Activated CD8-positive, alpha-beta T cell treated with anti-CD3 and anti-CD28 coated beads, Interleukin-2, amount 10 ng/mL, durations not matched to agents 7 days and 5 days (primary cell): ENCODE measurements at regions of chr19 and their contacts with region 1.

Region 1: GRCh38 chr19:46704379-46705076 is 12.4 kb downstream of the PRKD2 start:
- DNase-seq: peak; percentile 91
- ATAC-seq: peak; percentile 91
- H3K4me3 Mint-ChIP-seq: no peak overlapping the region
- H3K27ac Mint-ChIP-seq: peak overlapping the region; percentile 77
- H3K4me1 Mint-ChIP-seq: peaks cover 10% of the 10 kb centered on the region
- H3K27me3 Mint-ChIP-seq: no peaks in the 10 kb centered on the region

Region 2: GRCh38 chr19:46654621-46655152 is 49.8 kb before region 1 on chr19:
- CTCF ChIA-PET with region 1: no interaction called
- POLR2A ChIA-PET with region 1: no interaction called
- DNase-seq: no peak
- ATAC-seq: no peak
- H3K4me3 Mint-ChIP-seq: no peak overlapping the region
- H3K27ac Mint-ChIP-seq: no peak overlapping the region
- H3K4me1 Mint-ChIP-seq: peaks cover 3% of the 10 kb centered on the region
- H3K27me3 Mint-ChIP-seq: peaks cover 30% of the 10 kb centered on the region

Region 3: GRCh38 chr19:46717034-46717723 is 12.7 kb after region 1 on chr19 and contains the start of gene PRKD2:
- CTCF ChIA-PET with region 1: interaction called, 53 read pairs
- POLR2A ChIA-PET with region 1: interaction called, 19 read pairs
- DNase-seq: peak; percentile 93
- ATAC-seq: peak; percentile 43
- H3K4me3 Mint-ChIP-seq: peak within 1 kb of the TSS; percentile 94
- H3K27ac Mint-ChIP-seq: peak within 1 kb of the TSS; percentile 98
- H3K4me1 Mint-ChIP-seq: peaks cover 53% of the 10 kb centered on the region
- H3K27me3 Mint-ChIP-seq: no peaks in the 10 kb centered on the region
- total RNA-seq, gene PRKD2: 161 to 166 TPM

Region 4: GRCh38 chr19:46746281-46747013 is 41.9 kb after region 1 on chr19 and contains the start of gene STRN4:
- CTCF ChIA-PET with region 1: interaction called, 18 read pairs
- POLR2A ChIA-PET with region 1: interaction called, 4 read pairs
- DNase-seq: peak; percentile 65
- ATAC-seq: peak; percentile 56
- H3K4me3 Mint-ChIP-seq: peak within 1 kb of the TSS; percentile 94
- H3K27ac Mint-ChIP-seq: peak within 1 kb of the TSS; percentile 86
- H3K4me1 Mint-ChIP-seq: peaks cover 52% of the 10 kb centered on the region
- H3K27me3 Mint-ChIP-seq: no peaks in the 10 kb centered on the region
- total RNA-seq, gene STRN4: 79.6 to 90.2 TPM

Region 5: DNA sequence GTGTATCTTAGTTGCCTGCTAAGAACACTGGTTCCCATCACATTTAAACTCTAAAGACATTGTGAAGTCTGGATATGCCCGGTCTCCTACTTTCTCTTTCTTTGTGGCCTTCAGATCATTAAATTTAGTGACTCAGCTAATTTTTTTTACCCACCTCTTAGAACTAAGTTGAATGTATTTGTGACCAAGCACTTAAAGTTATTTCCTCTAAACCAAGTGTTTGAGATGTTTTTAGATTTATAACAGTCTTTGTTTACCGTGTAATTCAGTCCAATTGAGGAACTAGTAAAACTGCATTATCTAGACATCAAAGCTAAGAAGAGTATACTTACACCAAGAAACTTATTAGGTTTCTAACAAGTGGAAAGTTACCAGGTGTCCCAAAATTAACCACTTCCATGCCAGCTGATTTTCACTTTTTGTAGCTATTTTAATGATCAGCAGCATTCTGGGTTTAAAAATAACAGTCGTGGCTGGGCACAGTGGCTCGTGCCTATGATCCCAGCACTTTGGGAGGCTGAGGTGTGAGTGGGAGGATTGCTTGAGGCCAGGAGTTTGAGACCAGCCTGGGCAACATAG is 209.4 kb after region 1 on chr19:
- CTCF ChIA-PET with region 1: no interaction called
- POLR2A ChIA-PET with region 1: no interaction called
- DNase-seq: no peak
- ATAC-seq: no peak
- H3K4me3 Mint-ChIP-seq: no peak overlapping the region
- H3K27ac Mint-ChIP-seq: no peak overlapping the region
- H3K4me1 Mint-ChIP-seq: peaks cover 31% of the 10 kb centered on the region
- H3K27me3 Mint-ChIP-seq: no peaks in the 10 kb centered on the region